Common myeloid progenitor, CD34-positive (primary cell): ENCODE measurements at regions of chr9 and their contacts with region 1.

Region 1: GRCh38 chr9:75001719-75002422 is 26.2 kb downstream of the CARNMT1 start:
- DNase-seq: peak; percentile 90 to 95 (median 92)
- H3K4me3 ChIP-seq: peak overlapping the region in 2 of 7 experiments; percentile 34 to 37
- H3K27ac ChIP-seq: no peak overlapping the region
- H3K4me1 ChIP-seq: peaks cover 5 to 10% (median 10%) of the 10 kb centered on the region in 4 experiments
- H3K27me3 ChIP-seq: no peaks in the 10 kb centered on the region

Region 2: GRCh38 chr9:74783408-74783807 is 218.5 kb before region 1 on chr9:
- CTCF ChIA-PET with region 1: interaction called, 208 read pairs
- POLR2A ChIA-PET with region 1: no interaction called
- DNase-seq: no peak
- H3K4me3 ChIP-seq: no peak overlapping the region
- H3K27ac ChIP-seq: no peak overlapping the region
- H3K4me1 ChIP-seq: no peaks in the 10 kb centered on the region
- H3K27me3 ChIP-seq: peaks cover 0 to 2% (median 0%) of the 10 kb centered on the region in 5 experiments

Region 3: GRCh38 chr9:74952281-74953151 is 49.4 kb before region 1 on chr9 and contains the start of gene C9orf40:
- CTCF ChIA-PET with region 1: interaction called, 10 read pairs
- POLR2A ChIA-PET with region 1: interaction called, 3 read pairs
- DNase-seq: peak; percentile 90 to 93 (median 93)
- H3K4me3 ChIP-seq: peak within 1 kb of the TSS; percentile 83 to 95 (median 91)
- H3K27ac ChIP-seq: peak within 1 kb of the TSS; percentile 40 to 84
- H3K4me1 ChIP-seq: peaks cover 0 to 17% (median 10%) of the 10 kb centered on the region in 4 experiments
- H3K27me3 ChIP-seq: no peaks in the 10 kb centered on the region

Region 4: GRCh38 chr9:75013735-75014134 is 11.9 kb after region 1 on chr9:
- CTCF ChIA-PET with region 1: interaction called, 14 read pairs
- POLR2A ChIA-PET with region 1: no interaction called
- DNase-seq: peak in 2 of 3 donors; percentile 44 to 53
- H3K4me3 ChIP-seq: no peak overlapping the region
- H3K27ac ChIP-seq: no peak overlapping the region
- H3K4me1 ChIP-seq: no peaks in the 10 kb centered on the region
- H3K27me3 ChIP-seq: no peaks in the 10 kb centered on the region

Region 5: DNA sequence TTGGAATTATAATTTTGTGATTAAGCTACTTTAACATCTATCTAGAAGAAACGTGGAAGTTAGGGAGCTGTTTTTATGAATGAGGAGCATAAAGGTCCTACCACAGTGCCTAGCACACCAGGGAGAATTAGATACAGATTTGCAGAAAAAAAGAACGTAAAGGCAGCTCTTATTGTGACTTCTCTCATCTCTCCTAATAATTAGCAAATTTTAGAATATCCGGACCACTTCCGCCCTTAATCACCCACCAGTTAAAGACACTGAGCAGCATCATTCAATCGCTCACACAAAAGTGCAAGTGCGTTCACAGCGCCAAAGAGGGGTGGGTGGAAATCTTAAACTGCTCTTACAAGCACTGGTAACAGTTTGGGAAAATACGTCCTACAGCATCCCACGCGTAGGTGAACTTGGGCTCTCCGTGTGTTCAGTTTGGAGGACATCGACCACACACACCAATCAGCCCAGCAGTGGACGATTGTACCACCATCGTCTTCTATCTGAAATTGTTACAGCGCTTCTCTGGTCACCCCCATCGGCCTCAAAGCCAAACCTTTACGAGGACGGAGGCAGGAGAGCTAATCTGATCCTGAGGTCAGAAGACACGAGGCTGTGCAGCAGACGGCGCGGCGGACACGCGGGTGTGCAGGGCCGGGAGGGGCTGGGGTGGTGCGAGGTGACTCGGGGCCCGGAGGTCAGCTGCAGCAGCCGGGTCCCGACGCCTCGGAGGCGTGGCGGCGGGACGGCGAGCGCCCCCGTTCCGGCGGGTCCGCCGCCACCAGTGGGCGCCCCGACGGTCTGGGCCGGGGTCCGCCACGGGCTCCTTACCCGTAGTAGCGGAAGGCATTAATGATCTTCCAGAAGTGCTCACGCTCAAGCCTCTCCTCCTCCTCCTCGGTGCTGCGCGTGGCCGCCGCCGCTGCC is 25.6 kb after region 1 on chr9:
- CTCF ChIA-PET with region 1: interaction called, 14 read pairs
- POLR2A ChIA-PET with region 1: no interaction called
- DNase-seq: peak; percentile 32 to 77 (median 66)
- H3K4me3 ChIP-seq: peak overlapping the region; percentile 79 to 98 (median 91)
- H3K27ac ChIP-seq: peak overlapping the region; percentile 46 to 83
- H3K4me1 ChIP-seq: peaks cover 15 to 31% (median 24%) of the 10 kb centered on the region in 4 experiments
- H3K27me3 ChIP-seq: no peaks in the 10 kb centered on the region

Region 6: DNA sequence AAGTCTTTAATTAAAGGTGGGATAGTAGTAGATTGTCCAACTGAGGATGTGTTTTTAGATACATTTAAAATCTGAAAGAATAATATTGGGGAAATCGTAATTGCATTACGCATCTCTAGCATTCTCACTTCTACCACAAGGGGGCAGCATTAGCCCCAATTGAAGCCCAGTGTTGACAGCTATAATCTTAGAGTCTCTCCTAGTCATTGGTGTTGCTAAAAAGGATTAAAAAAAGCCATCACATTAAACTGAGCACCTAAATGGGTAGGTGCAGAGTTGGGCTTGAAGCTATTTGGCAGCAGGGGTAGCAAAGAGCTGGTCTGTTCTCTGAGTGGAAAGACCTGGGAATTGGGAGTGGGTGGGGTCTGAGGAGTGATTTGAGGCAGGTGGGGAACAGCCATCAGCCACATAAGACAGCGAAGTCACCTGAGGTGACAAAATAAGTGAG is 263.7 kb after region 1 on chr9:
- CTCF ChIA-PET with region 1: no interaction called
- POLR2A ChIA-PET with region 1: no interaction called
- DNase-seq: peak; percentile 24 to 65 (median 59)
- H3K4me3 ChIP-seq: no peak overlapping the region
- H3K27ac ChIP-seq: no peak overlapping the region
- H3K4me1 ChIP-seq: no peaks in the 10 kb centered on the region
- H3K27me3 ChIP-seq: no peaks in the 10 kb centered on the region